Activated naive CD4-positive, alpha-beta T cell treated with anti-CD3 and anti-CD28 coated beads for 36 hours (primary cell): ENCODE measurements at regions of chr16 and their contacts with region 1.

Region 1: GRCh38 chr16:11038767-11039166 is 94.4 kb downstream of the CLEC16A start:
- DNase-seq: no peak
- H3K4me3 Mint-ChIP-seq: no peak overlapping the region
- H3K27ac Mint-ChIP-seq: no peak overlapping the region
- H3K4me1 Mint-ChIP-seq: no peaks in the 10 kb centered on the region
- H3K27me3 Mint-ChIP-seq: no peaks in the 10 kb centered on the region

Region 2: DNA sequence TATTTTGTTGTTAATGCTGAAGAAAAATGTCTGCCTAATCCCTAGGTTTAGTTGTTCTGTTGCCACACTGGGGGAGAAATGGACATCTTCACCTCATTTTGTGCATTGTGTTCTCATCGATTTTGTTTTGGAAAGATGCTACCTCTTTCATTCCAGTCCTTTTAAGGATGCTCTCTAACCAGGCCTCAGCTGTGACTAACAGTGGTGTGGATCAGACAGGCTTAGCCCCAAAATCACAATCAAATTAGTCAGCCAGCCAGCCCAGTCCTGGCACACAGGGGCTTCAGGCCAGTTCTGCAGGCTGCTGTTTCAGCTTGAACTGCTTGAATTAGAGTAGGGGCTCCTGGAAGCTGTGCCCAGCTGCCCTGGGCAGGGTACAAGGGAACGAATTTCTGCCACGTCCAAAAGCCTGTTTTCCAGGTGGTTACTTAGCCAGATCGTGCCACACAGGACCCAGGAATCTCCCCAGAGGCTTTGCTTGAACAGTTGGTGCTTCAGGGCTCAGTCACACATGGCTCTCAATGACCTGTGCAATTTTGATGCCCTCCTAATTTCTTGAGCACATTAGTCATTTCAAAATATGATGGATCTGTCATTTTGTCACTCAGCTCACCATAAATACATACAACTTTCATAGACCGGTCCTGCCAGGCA is 33.7 kb before region 1 on chr16:
- CTCF ChIA-PET with region 1: no interaction called
- intact Hi-C with region 1: loop called (anchors 5 kb)
- DNase-seq: no peak
- H3K4me3 Mint-ChIP-seq: no peak overlapping the region
- H3K27ac Mint-ChIP-seq: no peak overlapping the region
- H3K4me1 Mint-ChIP-seq: peaks cover 3% of the 10 kb centered on the region
- H3K27me3 Mint-ChIP-seq: no peaks in the 10 kb centered on the region

Region 3: DNA sequence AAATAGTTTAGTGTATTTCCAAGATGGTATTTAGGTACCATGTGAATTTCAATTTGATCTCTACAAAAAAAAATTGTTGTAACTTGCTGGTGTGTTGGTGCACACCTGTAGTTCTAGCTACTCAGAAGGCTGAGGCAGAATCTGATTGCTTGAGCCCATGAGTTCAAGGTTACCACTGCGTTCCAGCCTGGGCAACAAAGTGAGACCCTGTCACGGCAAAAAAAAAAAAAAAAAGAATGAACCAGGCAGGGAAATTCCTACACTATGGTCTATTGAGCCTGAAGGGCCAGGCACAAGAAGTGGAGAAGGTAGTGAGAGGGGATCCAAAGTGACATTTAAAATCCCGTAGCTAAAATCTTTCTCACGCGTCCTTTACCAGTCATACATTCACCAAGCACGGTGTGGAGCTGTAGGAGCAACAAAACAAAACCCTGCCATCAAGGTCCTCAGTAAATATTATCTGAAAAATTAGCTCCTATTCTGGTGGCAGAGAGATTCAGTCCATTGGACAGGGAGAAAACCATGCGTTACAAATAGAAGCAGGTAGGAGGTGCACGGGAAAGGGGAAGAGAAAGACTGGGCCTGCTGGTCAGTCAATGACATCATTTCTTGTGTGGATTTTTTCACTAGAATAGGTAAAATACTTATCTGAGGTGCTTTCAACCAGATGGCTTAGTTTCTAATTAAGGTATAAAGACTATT is 676.6 kb after region 1 on chr16:
- CTCF ChIA-PET with region 1: no interaction called
- intact Hi-C with region 1: no loop called
- DNase-seq: no peak
- H3K4me3 Mint-ChIP-seq: no peak overlapping the region
- H3K27ac Mint-ChIP-seq: no peak overlapping the region
- H3K4me1 Mint-ChIP-seq: peaks cover 6% of the 10 kb centered on the region
- H3K27me3 Mint-ChIP-seq: no peaks in the 10 kb centered on the region